Posterior cingulate gyrus (tissue), 11 donors: ENCODE measurements at regions of chr2 and their contacts with region 1.

Region 1: DNA sequence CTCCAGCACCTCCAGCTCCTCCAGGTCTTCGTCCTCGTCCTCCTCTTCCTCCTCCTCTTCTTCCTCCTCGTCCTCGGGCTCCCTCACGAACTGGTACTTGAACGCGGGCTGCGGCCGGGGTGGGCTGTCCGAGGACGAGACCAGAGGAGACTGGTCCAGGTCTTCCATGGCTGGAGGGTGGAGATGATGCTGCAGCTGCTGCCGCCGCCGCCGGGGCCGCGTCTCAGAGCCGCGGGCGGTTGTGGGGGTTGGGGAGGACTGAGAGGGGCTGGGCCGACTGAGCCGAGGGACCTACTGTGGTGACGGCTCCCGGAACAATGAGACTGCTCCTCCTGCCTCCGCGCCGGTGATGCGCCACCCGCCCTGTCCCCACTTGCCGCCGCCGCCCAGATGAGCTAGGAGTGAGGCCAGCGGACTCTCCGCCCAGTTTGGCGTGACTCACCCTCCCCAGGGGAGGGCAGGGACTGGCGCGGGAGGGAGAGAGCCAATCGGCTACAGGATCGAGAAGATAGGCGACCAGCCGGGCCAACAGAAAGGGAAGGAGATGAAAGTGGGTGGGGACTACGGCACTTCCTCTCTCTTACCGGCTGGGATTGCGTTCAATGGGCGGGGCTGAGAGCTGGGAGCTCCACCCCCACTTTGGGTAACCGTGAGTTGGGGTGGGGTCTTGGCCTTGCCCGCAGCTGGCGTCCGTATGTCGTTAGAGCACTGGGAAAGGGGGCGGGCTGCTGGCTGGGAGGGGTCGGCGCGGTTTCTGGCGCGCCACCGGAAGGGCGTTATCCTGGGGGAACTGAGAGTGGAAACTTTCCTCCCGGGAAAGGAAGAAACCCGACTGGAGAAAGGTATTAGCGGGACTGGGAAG is at the start of gene RTN4:
- DNase-seq: peak; percentile 99 to 100 (median 99)

Region 2: GRCh38 chr2:54899576-54900200 is 150.7 kb before region 1 on chr2:
- intact Hi-C with region 1: loop called (anchors 10 kb)
- DNase-seq: peak in 1 of 10 donors; percentile 25

Region 3: GRCh38 chr2:55014962-55015939 is 35.1 kb before region 1 on chr2:
- intact Hi-C with region 1: loop called (anchors 2 kb)
- DNase-seq: peak in 6 of 10 donors; percentile 29 to 84 (median 42)

Region 4: DNA sequence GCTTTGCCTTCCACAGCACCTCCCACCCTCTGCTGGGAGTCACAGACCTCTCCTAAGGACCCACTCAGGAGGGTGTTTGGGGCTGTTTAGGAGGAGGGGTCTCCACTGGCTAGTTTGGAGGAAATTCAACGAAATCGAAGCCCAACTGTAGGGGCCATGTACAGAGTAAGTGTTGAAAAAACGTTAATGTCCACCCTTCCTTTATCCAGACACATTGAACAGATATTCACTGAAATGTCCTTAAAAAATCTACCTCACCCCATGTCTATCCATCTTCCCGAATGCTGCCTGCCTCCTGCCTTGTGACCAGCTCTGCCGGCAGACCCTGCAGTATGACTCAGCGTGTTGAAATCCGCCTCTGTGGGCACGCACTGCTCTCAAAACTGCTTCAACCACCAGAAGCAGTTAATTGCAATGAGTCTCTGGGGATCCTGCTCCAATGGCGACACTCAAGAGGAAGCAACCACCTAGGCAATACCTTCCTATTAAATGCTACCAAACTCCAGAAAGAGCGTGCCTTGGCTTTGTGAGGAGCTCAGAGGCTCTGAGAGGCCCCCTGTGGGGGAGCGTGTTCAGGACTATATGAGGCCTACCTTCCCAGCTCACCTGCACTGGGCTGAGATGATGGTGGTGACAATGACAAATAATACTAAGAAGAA is 61.3 kb after region 1 on chr2:
- intact Hi-C with region 1: loop called (anchors 1 kb)
- DNase-seq: peak in 9 of 10 donors; percentile 55 to 94 (median 69)

Region 5: DNA sequence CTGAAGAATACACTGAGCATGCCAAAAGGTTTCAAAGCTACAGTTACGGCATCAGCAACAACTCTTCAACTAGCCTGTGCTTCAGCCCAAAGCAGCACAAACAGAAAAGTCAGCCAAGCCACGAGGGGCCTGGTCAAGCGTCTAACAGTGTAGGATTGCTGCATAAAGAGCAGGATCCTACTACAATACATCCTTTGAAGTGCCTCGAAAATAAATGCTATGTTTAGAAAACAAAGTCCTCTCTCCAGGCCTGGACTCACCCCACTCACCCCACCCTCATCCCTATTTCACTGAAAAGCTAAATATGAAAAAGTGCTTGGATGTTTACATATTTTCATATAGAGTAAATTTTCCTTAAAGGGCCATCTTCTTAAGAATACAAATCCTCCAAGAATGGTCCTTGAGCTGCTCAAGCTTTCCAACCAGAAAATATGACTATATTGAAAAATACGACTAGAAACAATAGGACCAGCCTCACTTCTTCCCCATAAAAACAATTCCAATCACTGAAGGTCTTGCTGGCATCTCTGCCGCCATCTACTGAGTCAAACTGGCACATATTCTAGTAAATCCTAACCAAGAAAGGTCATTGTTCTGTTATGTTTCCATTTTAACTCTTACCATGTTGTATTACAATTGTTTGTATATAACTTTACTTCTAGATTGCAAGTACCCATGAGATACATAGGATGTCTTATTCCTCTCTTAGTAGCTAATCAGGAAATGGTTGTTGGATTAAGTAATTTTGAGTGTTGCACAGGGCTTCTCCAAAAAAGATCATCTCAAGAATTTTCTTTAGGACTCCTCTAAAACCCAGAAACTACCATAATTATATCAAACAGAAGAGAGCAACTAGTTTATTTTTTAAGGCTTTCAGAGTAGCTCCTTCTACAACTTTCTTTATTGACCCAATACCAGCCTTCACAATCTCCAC is 118.1 kb after region 1 on chr2:
- intact Hi-C with region 1: loop called (anchors 2 kb)
- DNase-seq: peak; percentile 46 to 95 (median 66)

Region 6: GRCh38 chr2:55232084-55232862 is 181.9 kb after region 1 on chr2 and contains the starts of genes CLHC1 and RPS27A:
- intact Hi-C with region 1: loop called (anchors 10 kb)
- DNase-seq: peak; percentile 85 to 98 (median 90)